ENCODE measurements at regions of chr10 and their contacts with region 1.

Region 1: GRCh38 chr10:124961248-124961570 is 19.3 kb downstream of the ZRANB1 start:
- DNase-seq: no peak
- H3K4me3 ChIP-seq: no peak overlapping the region
- H3K27ac ChIP-seq: peak overlapping the region in 1 of 2 donors; percentile 15
- H3K4me1 ChIP-seq: peaks cover 8 to 10% of the 10 kb centered on the region in 2 donors
- H3K27me3 ChIP-seq: no peaks in the 10 kb centered on the region
- CTCF ChIP-seq: no peak

Region 2: GRCh38 chr10:124916585-124917427 is 44.4 kb before region 1 on chr10:
- intact Hi-C with region 1: loop called (anchors 5 kb)
- DNase-seq: peak; percentile 91 to 99
- H3K4me3 ChIP-seq: peak overlapping the region; percentile 95 to 96
- H3K27ac ChIP-seq: peak overlapping the region; percentile 98
- H3K4me1 ChIP-seq: peaks cover 3 to 29% of the 10 kb centered on the region in 2 donors
- H3K27me3 ChIP-seq: no peaks in the 10 kb centered on the region
- CTCF ChIP-seq: peak in 1 of 3 experiments; percentile 6

Region 3: DNA sequence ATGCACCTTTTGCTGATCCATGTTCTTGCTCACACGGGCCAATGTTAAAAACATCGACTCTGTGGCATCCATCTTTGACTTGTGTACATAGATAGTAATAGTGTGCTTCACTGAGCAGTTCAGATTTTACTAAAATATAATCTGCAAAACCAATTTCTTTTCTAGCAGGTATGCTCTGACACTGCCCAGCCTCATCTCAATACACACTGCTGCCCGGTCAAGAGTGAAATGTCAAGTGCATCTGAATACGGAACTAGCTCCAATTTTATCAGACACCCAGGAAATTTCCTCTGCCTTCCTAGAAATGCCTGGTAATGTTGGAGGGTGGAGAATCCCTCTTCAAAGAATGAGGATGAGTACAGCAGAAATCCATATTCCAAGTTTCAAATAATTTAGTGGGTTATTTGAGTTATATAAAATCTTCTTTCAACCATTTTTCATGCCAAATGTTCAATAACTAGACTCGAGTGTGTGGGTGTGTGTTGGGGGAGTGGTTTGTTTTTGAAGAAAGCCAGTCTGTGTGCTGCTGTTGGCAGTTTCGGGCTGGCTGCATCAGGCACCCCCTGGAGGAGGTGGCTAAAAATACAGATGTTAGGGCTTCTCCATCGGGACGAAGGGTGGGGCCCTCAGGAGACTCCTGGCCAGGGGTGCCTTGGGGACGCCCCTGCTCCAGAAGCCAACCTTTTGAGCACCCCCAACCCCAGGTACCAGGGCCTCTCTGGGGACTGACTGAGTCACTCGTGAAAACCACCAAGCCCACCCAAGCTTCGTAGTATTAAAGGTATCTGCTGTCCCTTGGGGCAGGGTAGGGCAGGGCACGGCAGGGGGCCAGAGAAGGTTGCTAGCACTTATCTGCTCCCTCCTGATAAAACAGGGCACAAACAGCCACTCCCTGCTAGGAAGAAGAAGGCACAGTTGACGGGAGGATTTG is 183.7 kb after region 1 on chr10:
- intact Hi-C with region 1: no loop called
- DNase-seq: no peak
- H3K4me3 ChIP-seq: no peak overlapping the region
- H3K27ac ChIP-seq: peak overlapping the region; percentile 30 to 89
- H3K4me1 ChIP-seq: peaks cover 29 to 71% of the 10 kb centered on the region in 2 donors
- H3K27me3 ChIP-seq: no peaks in the 10 kb centered on the region
- CTCF ChIP-seq: peak; percentile 22 to 52 (median 24)

Region 4: GRCh38 chr10:125316449-125316848 is 355.2 kb after region 1 on chr10:
- intact Hi-C with region 1: no loop called
- DNase-seq: no peak
- H3K4me3 ChIP-seq: no peak overlapping the region
- H3K27ac ChIP-seq: no peak overlapping the region
- H3K4me1 ChIP-seq: no peaks in the 10 kb centered on the region
- H3K27me3 ChIP-seq: no peaks in the 10 kb centered on the region
- CTCF ChIP-seq: no peak

Measured in ascending aorta (tissue), 2 donors.